ENCODE measurements at regions of chr18 and their contacts with region 1.

Region 1: GRCh38 chr18:47669815-47670214 is 260.6 kb downstream of the SMAD2 start:
- DNase-seq: no peak
- ATAC-seq: no peak
- H3K4me3 ChIP-seq: no peak overlapping the region
- H3K27ac ChIP-seq: no peak overlapping the region
- H3K4me1 ChIP-seq: no peaks in the 10 kb centered on the region
- H3K27me3 ChIP-seq: no peaks in the 10 kb centered on the region; a peak in 1 of 4 replicates
- CTCF ChIP-seq: no peak
- EP300 ChIP-seq: no peak
- POLR2A ChIP-seq: no peak
- RAD21 ChIP-seq: no peak

Region 2: DNA sequence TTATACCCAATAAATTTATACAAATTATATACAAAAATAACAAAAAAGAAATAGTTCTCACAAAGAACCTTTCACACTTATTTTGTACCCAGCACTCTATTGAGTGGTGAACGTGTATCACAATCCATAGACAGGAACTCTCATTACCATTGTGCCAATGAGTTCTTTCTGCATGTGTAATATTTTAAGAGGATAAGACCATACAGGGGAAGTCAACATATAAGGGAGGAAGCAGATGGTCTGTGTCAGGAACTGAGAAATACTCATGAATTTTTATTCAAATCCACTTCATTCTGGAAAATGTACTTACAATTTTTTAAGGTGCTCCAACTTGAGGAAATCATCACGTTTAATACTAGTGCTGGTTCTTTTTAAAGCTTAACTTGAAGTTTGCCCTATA is 607.3 kb before region 1 on chr18:
- CTCF ChIA-PET with region 1: no interaction called
- POLR2A ChIA-PET with region 1: no interaction called
- RAD21 ChIA-PET with region 1: no interaction called
- SMC1A ChIA-PET with region 1: no interaction called
- in situ Hi-C with region 1: no loop called
- intact Hi-C with region 1: no loop called
- DNase-seq: no peak
- ATAC-seq: no peak
- H3K4me3 ChIP-seq: no peak overlapping the region
- H3K27ac ChIP-seq: no peak overlapping the region
- H3K4me1 ChIP-seq: no peaks in the 10 kb centered on the region
- H3K27me3 ChIP-seq: no peaks in the 10 kb centered on the region
- CTCF ChIP-seq: no peak
- EP300 ChIP-seq: no peak
- POLR2A ChIP-seq: no peak
- RAD21 ChIP-seq: no peak

Region 3: DNA sequence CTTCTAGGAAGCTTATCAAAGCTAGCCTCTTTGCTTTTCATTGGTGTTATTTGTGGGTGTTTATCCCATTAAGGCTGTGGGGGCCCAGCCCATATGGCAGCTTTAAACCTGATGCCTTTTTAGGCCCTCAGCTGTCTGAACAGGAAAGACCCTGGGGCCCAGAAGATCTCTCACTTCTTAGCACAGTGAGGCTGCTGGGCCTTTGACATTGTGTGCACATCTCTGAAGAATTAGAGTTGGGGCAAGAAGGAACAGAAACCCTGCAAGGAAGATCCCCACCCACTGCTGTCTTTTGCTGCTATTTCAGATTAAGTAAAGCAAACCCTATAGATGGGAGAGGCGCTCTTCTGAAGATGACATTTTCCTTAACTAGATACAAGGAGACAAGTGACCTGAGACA is 10.7 kb after region 1 on chr18:
- CTCF ChIA-PET with region 1: interaction called, 10 read pairs
- POLR2A ChIA-PET with region 1: no interaction called
- RAD21 ChIA-PET with region 1: interaction called, 11 read pairs
- SMC1A ChIA-PET with region 1: interaction called, 3 read pairs
- in situ Hi-C with region 1: no loop called
- intact Hi-C with region 1: no loop called
- DNase-seq: peak; percentile 77
- ATAC-seq: peak; percentile 90
- H3K4me3 ChIP-seq: 0 out of 2 replicates have a peak overlapping the region, but pooled peaks have one; percentile 32
- H3K27ac ChIP-seq: peak overlapping the region; percentile 85
- H3K4me1 ChIP-seq: peaks cover 39% of the 10 kb centered on the region
- H3K27me3 ChIP-seq: no peaks in the 10 kb centered on the region
- CTCF ChIP-seq: no peak
- EP300 ChIP-seq: peak in 1 of 2 experiments; percentile 78; a peak in 3 of 4 replicates
- POLR2A ChIP-seq: no peak
- RAD21 ChIP-seq: no peak

Measured in GM12878 (cell line).